ENCODE measurements at regions of chr16 and their contacts with region 1.

Region 1: DNA sequence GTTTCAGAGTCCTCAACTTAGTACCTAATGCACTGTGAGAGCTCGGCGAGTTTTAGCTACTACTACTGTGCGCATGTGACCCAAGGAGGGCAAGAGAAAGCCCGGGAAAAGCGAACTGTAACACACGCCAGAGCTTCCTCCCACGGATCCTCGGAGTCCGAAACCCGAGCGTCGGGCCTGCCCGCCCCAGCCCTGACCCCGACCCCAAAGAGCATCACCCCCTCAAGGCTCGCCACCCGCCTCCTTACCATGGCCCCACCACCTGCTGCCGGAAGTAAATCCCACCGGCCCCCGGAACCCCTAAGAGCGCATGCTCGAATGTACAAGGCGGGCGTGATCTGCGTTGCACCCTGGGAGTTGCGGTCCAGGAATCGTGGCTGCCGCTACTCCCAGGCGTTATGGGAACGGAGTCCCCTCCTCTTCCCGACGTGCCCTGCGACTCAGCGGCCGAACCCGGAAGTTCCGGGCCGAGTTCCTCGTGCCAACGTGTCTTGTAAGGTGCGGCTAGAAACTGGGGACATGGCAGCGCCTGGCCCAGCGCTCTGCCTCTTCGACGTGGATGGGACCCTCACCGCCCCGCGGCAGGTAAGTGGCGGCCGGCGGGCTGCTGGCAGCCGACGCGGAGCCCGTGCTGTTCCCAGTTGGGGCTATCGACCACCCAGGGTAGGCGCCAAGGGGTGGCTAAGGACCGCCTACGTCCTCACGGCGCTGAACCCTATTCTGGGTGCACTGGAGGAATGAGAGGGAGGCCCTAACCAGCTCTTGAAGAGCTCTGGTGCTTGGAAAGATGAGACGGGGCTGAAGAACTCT is at the starts of genes PMM2 and TMEM186:
- DNase-seq: peak; percentile 97
- ATAC-seq: peak; percentile 97
- H3K4me3 ChIP-seq: peak within 1 kb of the TSS; percentile 69 to 98 (median 73)
- H3K4me3 Mint-ChIP-seq: peak within 1 kb of the TSS; percentile 97
- H3K27ac ChIP-seq: peak within 1 kb of the TSS; percentile 69 to 91
- H3K27ac Mint-ChIP-seq: peak within 1 kb of the TSS; percentile 95
- H3K4me1 ChIP-seq: peaks cover 29 to 31% of the 10 kb centered on the region in 2 donors
- H3K4me1 Mint-ChIP-seq: peaks cover 34% of the 10 kb centered on the region
- H3K27me3 ChIP-seq: no peaks in the 10 kb centered on the region
- H3K27me3 Mint-ChIP-seq: no peaks in the 10 kb centered on the region
- CTCF ChIP-seq: no peak
- total RNA-seq, gene PMM2: 45.3 and 47.5 TPM in 2 replicates
- total RNA-seq, gene TMEM186: 13.9 and 16.7 TPM in 2 replicates

Region 2: GRCh38 chr16:8436931-8437330 is 360.6 kb before region 1 on chr16:
- CTCF ChIA-PET with region 1: no interaction called
- POLR2A ChIA-PET with region 1: no interaction called
- intact Hi-C with region 1: no loop called
- DNase-seq: no peak
- ATAC-seq: no peak
- H3K4me3 ChIP-seq: no peak overlapping the region
- H3K4me3 Mint-ChIP-seq: no peak overlapping the region
- H3K27ac ChIP-seq: no peak overlapping the region
- H3K27ac Mint-ChIP-seq: no peak overlapping the region
- H3K4me1 ChIP-seq: no peaks in the 10 kb centered on the region
- H3K4me1 Mint-ChIP-seq: no peaks in the 10 kb centered on the region
- H3K27me3 ChIP-seq: no peaks in the 10 kb centered on the region
- H3K27me3 Mint-ChIP-seq: peaks cover 8% of the 10 kb centered on the region
- CTCF ChIP-seq: no peak

Region 3: GRCh38 chr16:8567750-8568617 is 229.6 kb before region 1 on chr16:
- CTCF ChIA-PET with region 1: interaction called, 3 read pairs
- POLR2A ChIA-PET with region 1: no interaction called
- intact Hi-C with region 1: loop called (anchors 1 kb)
- DNase-seq: peak; percentile 86
- ATAC-seq: peak; percentile 93
- H3K4me3 ChIP-seq: no peak overlapping the region
- H3K4me3 Mint-ChIP-seq: no peak overlapping the region
- H3K27ac ChIP-seq: no peak overlapping the region
- H3K27ac Mint-ChIP-seq: peak overlapping the region; percentile 34
- H3K4me1 ChIP-seq: peaks cover 0 to 6% of the 10 kb centered on the region in 2 donors
- H3K4me1 Mint-ChIP-seq: peaks cover 7% of the 10 kb centered on the region
- H3K27me3 ChIP-seq: peaks cover 0 to 3% (median 0%) of the 10 kb centered on the region in 4 experiments
- H3K27me3 Mint-ChIP-seq: peaks cover 16% of the 10 kb centered on the region
- CTCF ChIP-seq: peak; percentile 100

Region 4: DNA sequence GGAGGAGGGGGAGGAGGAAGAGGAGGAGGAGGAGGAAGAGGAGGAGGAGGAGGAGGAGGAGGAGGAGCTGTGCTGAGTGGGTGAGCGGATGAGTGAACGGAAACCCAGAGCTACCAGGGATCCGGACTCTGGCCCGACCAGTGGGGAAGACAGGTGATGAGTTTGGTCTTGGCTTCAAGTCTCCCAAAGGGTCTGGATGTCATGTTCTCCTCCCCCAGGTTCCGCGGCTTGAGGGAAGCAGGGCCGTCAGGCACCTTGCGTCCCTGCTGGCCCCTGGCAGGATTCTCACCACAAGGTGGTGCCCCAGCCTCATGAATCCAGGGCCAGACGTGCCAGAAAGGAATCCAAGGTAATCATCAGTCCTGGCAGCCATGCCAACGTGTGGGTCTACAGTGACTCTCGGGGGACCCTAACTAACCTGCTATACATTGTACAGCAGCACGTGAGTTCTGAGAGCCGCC is 136.7 kb before region 1 on chr16:
- CTCF ChIA-PET with region 1: interaction called, 14 read pairs
- POLR2A ChIA-PET with region 1: no interaction called
- intact Hi-C with region 1: no loop called
- DNase-seq: peak; percentile 61
- ATAC-seq: peak; percentile 56
- H3K4me3 ChIP-seq: no peak overlapping the region
- H3K4me3 Mint-ChIP-seq: no peak overlapping the region
- H3K27ac ChIP-seq: no peak overlapping the region
- H3K27ac Mint-ChIP-seq: no peak overlapping the region
- H3K4me1 ChIP-seq: no peaks in the 10 kb centered on the region
- H3K4me1 Mint-ChIP-seq: no peaks in the 10 kb centered on the region
- H3K27me3 ChIP-seq: no peaks in the 10 kb centered on the region
- H3K27me3 Mint-ChIP-seq: no peaks in the 10 kb centered on the region
- CTCF ChIP-seq: peak; percentile 36

Region 5: GRCh38 chr16:8674413-8675022 is 123.1 kb before region 1 on chr16 and contains the start of gene ABAT:
- CTCF ChIA-PET with region 1: no interaction called
- POLR2A ChIA-PET with region 1: no interaction called
- intact Hi-C with region 1: loop called (anchors 1 kb)
- DNase-seq: peak; percentile 90
- ATAC-seq: peak; percentile 100
- H3K4me3 ChIP-seq: peak within 1 kb of the TSS; percentile 71 to 99 (median 81)
- H3K4me3 Mint-ChIP-seq: peak within 1 kb of the TSS; percentile 92
- H3K27ac ChIP-seq: peak within 1 kb of the TSS; percentile 51 to 83
- H3K27ac Mint-ChIP-seq: peak within 1 kb of the TSS; percentile 86
- H3K4me1 ChIP-seq: peaks cover 17 to 18% of the 10 kb centered on the region in 2 donors
- H3K4me1 Mint-ChIP-seq: peaks cover 24% of the 10 kb centered on the region
- H3K27me3 ChIP-seq: no peaks in the 10 kb centered on the region
- H3K27me3 Mint-ChIP-seq: no peaks in the 10 kb centered on the region
- CTCF ChIP-seq: no peak
- total RNA-seq, gene ABAT: 13.8 and 14.3 TPM in 2 replicates

Region 6: GRCh38 chr16:8720080-8720966 is 77.2 kb before region 1 on chr16:
- CTCF ChIA-PET with region 1: no interaction called
- POLR2A ChIA-PET with region 1: no interaction called
- intact Hi-C with region 1: no loop called
- DNase-seq: no peak
- ATAC-seq: peak; percentile 31
- H3K4me3 ChIP-seq: no peak overlapping the region
- H3K4me3 Mint-ChIP-seq: no peak overlapping the region
- H3K27ac ChIP-seq: no peak overlapping the region
- H3K27ac Mint-ChIP-seq: no peak overlapping the region
- H3K4me1 ChIP-seq: peaks cover 0 to 26% of the 10 kb centered on the region in 2 donors
- H3K4me1 Mint-ChIP-seq: peaks cover 5% of the 10 kb centered on the region
- H3K27me3 ChIP-seq: no peaks in the 10 kb centered on the region
- H3K27me3 Mint-ChIP-seq: no peaks in the 10 kb centered on the region
- CTCF ChIP-seq: no peak

Region 7: GRCh38 chr16:8878521-8878911 is 80.9 kb after region 1 on chr16:
- CTCF ChIA-PET with region 1: interaction called, 4 read pairs
- POLR2A ChIA-PET with region 1: no interaction called
- intact Hi-C with region 1: loop called (anchors 5 kb)
- DNase-seq: no peak
- ATAC-seq: no peak
- H3K4me3 ChIP-seq: no peak overlapping the region
- H3K4me3 Mint-ChIP-seq: no peak overlapping the region
- H3K27ac ChIP-seq: no peak overlapping the region
- H3K27ac Mint-ChIP-seq: no peak overlapping the region
- H3K4me1 ChIP-seq: peaks cover 0 to 5% of the 10 kb centered on the region in 2 donors
- H3K4me1 Mint-ChIP-seq: peaks cover 7% of the 10 kb centered on the region
- H3K27me3 ChIP-seq: peaks cover 0 to 6% (median 3%) of the 10 kb centered on the region in 4 experiments
- H3K27me3 Mint-ChIP-seq: peaks cover 8% of the 10 kb centered on the region
- CTCF ChIP-seq: no peak

Region 8: DNA sequence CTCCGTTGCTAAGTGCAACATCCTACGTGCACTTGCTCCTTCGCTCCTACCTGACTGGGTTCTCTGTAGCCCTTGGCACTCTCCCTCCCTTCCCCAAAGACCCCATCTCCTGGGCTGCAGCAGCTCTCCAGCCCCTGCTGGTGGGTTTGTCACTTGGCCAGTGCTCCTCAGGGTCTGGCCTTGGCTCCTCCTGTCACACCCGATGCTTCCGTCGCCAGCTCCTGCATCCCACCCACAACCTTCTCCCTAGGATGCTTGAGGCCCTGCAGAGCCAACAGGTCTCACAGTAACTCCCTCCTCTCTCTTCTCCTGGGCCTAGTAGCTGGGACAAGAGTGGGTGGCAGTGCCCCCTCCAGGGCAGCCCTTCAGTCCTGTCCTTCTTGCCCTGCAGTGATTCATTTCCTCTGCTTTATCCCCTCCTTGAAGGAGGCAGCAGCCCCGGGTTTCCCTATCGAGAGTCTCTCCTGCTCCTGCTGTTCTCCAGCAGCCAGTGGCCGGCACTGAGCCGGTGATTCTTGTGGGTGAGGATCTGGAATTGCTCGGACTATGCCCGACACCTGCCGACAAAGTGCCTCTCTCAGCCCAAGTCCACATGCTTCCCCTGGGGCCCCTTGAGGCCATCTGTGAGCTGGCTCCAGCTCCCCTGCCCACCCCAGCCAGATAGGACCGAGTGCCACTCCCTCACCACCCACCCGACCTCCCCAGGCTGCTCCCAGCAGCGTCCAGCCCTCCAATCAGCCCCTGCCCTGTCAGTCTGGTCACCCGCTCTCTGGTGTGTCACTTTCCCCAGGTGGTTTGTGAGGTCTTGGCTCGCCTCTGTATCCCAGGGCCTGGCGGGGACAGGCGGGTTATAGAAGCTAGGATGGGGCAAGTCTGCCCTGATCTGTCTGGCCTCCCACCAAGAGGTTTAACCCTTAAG is 88.4 kb after region 1 on chr16:
- CTCF ChIA-PET with region 1: no interaction called
- POLR2A ChIA-PET with region 1: no interaction called
- intact Hi-C with region 1: loop called (anchors 1 kb)
- DNase-seq: peak; percentile 39
- ATAC-seq: no peak
- H3K4me3 ChIP-seq: no peak overlapping the region
- H3K4me3 Mint-ChIP-seq: no peak overlapping the region
- H3K27ac ChIP-seq: no peak overlapping the region
- H3K27ac Mint-ChIP-seq: peak overlapping the region; percentile 71
- H3K4me1 ChIP-seq: peaks cover 5 to 21% of the 10 kb centered on the region in 2 donors
- H3K4me1 Mint-ChIP-seq: peaks cover 23% of the 10 kb centered on the region
- H3K27me3 ChIP-seq: peaks cover 0 to 11% (median 5%) of the 10 kb centered on the region in 4 experiments
- H3K27me3 Mint-ChIP-seq: peaks cover 12% of the 10 kb centered on the region
- CTCF ChIP-seq: no peak

Region 9: GRCh38 chr16:8963825-8964441 is 166.4 kb after region 1 on chr16 and contains the start of gene USP7:
- CTCF ChIA-PET with region 1: no interaction called
- POLR2A ChIA-PET with region 1: no interaction called
- intact Hi-C with region 1: loop called (anchors 2 kb)
- DNase-seq: peak; percentile 93
- ATAC-seq: peak; percentile 88
- H3K4me3 ChIP-seq: peak within 1 kb of the TSS; percentile 56 to 80 (median 65)
- H3K4me3 Mint-ChIP-seq: peak within 1 kb of the TSS; percentile 90
- H3K27ac ChIP-seq: peak within 1 kb of the TSS; percentile 87 to 89
- H3K27ac Mint-ChIP-seq: peak within 1 kb of the TSS; percentile 95
- H3K4me1 ChIP-seq: peaks cover 35 to 39% of the 10 kb centered on the region in 2 donors
- H3K4me1 Mint-ChIP-seq: peaks cover 39% of the 10 kb centered on the region
- H3K27me3 ChIP-seq: peaks cover 0 to 4% (median 0%) of the 10 kb centered on the region in 4 experiments
- H3K27me3 Mint-ChIP-seq: peaks cover 5% of the 10 kb centered on the region
- CTCF ChIP-seq: no peak
- total RNA-seq, gene USP7: 223 and 232 TPM in 2 replicates

Region 10: GRCh38 chr16:9176547-9177418 is 379.2 kb after region 1 on chr16:
- CTCF ChIA-PET with region 1: no interaction called
- POLR2A ChIA-PET with region 1: no interaction called
- intact Hi-C with region 1: no loop called
- DNase-seq: no peak
- ATAC-seq: no peak
- H3K4me3 ChIP-seq: no peak overlapping the region
- H3K4me3 Mint-ChIP-seq: no peak overlapping the region
- H3K27ac ChIP-seq: no peak overlapping the region
- H3K27ac Mint-ChIP-seq: no peak overlapping the region
- H3K4me1 ChIP-seq: no peaks in the 10 kb centered on the region
- H3K4me1 Mint-ChIP-seq: no peaks in the 10 kb centered on the region
- H3K27me3 ChIP-seq: peaks cover 0 to 2% (median 0%) of the 10 kb centered on the region in 4 experiments
- H3K27me3 Mint-ChIP-seq: peaks cover 34% of the 10 kb centered on the region
- CTCF ChIP-seq: no peak

Measured in B cell (primary cell).